HEK293 (cell line): ENCODE measurements at regions of chr17 and their contacts with region 1.

Region 1: GRCh38 chr17:19470532-19471261 is 59.7 kb downstream of the RNF112 start:
- H3K4me3 ChIP-seq: no peak overlapping the region
- H3K27ac ChIP-seq: peak overlapping the region; percentile 1; the same call in 1 of the 2 replicates
- H3K4me1 ChIP-seq: peaks cover 6% of the 10 kb centered on the region
- CTCF ChIP-seq: no peak

Region 2: DNA sequence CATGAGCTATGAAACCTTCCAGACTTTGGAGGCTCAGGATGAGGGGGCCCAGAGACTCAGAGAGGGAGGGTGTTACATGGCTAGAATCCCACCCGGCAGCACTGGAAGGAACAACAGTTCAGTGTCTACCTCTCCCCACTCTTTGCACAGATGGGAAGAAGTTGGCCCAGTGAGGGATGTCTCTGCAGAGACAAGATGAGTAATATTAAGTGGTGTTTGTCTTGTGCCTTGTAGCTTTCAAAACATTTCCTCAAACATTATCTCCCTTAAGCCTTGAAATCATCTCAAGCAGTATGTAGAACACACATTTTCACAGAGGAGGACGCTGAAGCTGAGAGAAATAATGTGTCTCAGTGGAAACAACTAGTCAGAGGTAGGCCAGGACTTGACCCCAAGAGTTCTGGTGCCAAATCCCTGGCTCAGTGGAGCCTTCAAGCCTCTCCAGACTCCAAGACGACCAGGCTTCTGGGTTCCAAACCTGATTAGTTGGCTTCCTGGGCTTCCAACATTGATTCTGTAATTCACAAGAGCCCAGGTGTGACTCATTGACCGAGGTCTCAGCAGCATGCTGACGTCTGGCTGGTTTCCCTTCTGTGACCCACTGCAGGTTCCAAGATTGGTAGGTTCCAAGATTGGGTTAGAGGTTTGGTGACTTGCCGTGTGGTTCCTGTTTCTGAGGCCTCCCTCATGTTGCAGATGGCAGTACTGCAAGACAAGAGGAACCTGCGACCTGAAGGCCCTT is 52.3 kb before region 1 on chr17:
- CTCF ChIA-PET with region 1: no interaction called
- POLR2A ChIA-PET with region 1: no interaction called
- H3K4me3 ChIP-seq: no peak overlapping the region
- H3K27ac ChIP-seq: no peak overlapping the region
- H3K4me1 ChIP-seq: no peaks in the 10 kb centered on the region
- CTCF ChIP-seq: no peak

Region 3: DNA sequence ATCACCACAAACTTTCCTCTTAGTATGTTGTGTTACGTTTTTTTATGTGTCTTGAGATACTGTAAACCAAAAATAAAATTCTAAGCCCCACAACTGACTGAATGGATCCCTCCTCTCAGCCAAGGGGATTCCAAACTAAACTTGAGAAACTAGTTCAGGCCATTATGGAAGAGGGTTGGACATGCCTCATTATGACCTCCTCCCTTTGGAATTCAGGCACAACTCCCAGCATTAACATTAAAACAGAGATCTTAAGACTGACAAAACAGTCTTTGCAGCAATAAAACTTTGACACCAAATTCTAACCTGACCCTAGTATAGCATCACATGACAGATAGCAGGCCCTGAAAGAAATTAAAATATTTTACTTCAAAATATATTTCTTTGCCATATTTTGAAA is 11.9 kb after region 1 on chr17:
- CTCF ChIA-PET with region 1: interaction called, 5 read pairs
- POLR2A ChIA-PET with region 1: interaction called, 10 read pairs
- H3K4me3 ChIP-seq: no peak overlapping the region
- H3K27ac ChIP-seq: no peak overlapping the region
- H3K4me1 ChIP-seq: no peaks in the 10 kb centered on the region
- CTCF ChIP-seq: no peak